ENCODE measurements at regions of chr10 and their contacts with region 1.

Region 1: GRCh38 chr10:7424315-7424714 is 13.5 kb upstream of the SFMBT2 start:
- DNase-seq: no peak
- ATAC-seq: no peak

Region 2: DNA sequence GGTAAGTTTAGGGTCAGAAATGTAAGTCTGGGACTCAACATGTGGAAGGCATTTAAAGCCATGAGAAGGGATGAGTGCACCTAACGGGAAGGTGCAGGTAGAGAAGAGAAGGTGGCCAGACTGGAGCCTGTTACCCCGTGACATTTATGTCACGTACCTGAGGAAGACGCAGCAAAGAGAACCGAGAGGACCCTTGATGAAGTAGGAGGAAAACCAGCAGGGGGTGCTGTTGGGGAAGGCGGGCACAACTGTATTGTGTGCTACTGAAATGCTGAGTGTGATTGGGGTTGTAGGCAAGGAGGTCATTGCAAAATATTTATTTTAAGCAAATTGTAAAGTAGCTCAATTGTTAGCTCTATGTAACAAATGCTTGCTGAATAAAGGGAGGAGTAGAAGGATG is 506.0 kb before region 1 on chr10:
- intact Hi-C with region 1: loop called (anchors 10 kb)
- DNase-seq: peak; percentile 35
- ATAC-seq: no peak

Measured in left ventricle myocardium superior (tissue), 1 donor.